Activated CD8-positive, alpha-beta T cell treated with anti-CD3 and anti-CD28 coated beads, Interleukin-2, amount 10 ng/mL, durations not matched to agents 7 days and 5 days (primary cell): ENCODE measurements at regions of chr16 and their contacts with region 1.

Region 1: DNA sequence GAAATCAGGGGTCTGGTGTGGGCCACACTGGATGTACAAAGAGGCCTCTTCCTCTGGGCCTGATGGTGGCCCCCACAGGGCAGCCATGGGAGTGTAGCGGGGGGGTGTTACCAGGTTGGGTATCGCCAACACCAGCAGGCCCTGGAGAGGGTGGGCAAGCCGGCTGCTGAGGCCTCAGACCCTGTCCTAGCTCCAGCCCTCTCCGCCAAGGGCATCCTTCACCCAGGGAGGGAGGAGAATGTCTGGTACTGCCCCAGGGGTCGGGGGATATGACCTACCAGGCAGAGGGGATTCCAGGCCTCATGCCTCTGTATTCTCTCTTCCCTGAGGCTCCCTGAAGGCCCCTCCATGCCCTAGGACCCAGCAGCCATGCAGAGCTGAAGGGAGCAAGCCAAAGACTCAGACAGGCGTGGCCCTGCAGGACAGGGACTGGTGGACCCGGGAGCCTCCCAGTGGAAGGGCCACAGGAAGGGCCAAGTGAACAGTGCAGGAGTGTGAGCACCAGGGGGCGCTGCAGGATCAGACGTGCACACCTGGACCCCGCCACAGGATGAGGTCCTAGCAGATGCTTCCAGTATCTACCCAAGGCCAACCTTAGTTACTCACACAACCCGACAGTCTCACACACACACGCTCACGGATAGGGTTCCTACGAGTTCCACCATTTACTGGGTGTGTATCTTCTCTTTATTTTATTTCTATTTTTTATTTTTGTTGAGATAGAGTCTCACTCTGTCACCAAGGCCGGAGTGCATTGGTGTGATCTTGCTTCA is 10.9 kb upstream of the CES4A start:
- DNase-seq: peak; percentile 94
- ATAC-seq: peak; percentile 99
- H3K4me3 Mint-ChIP-seq: no peak overlapping the region
- H3K27ac Mint-ChIP-seq: peak overlapping the region; percentile 73
- H3K4me1 Mint-ChIP-seq: peaks cover 60% of the 10 kb centered on the region
- H3K27me3 Mint-ChIP-seq: no peaks in the 10 kb centered on the region

Region 2: DNA sequence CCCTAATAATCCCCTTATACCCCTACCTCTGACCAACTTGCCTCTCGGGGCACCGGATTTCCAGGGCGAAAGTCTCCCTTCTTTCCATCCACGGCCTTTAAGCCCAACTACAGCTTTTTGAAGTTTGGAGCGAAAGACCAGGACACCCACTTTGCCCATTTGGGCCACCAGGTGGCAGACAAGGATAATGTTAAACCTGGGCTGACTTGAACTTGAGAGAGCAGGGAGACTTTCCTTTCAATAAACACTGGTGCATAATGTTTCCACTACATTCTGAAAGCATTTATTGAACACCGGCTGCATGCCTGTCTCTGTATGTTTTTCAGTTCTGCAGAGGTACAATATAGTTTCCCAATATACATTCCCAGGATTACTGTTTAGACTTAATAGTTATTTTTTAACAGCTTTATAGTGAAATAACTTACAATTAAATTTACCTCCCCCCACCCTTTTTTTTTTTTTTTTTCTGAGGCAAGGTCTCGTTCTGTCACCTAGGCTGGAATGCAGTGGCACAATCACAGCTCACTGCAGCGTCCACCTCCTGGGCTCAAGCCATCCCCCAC is 23.3 kb before region 1 on chr16:
- CTCF ChIA-PET with region 1: interaction called, 13 read pairs
- POLR2A ChIA-PET with region 1: no interaction called
- DNase-seq: peak; percentile 87
- ATAC-seq: peak; percentile 98
- H3K4me3 Mint-ChIP-seq: no peak overlapping the region
- H3K27ac Mint-ChIP-seq: no peak overlapping the region
- H3K4me1 Mint-ChIP-seq: peaks cover 22% of the 10 kb centered on the region
- H3K27me3 Mint-ChIP-seq: peaks cover 33% of the 10 kb centered on the region

Region 3: DNA sequence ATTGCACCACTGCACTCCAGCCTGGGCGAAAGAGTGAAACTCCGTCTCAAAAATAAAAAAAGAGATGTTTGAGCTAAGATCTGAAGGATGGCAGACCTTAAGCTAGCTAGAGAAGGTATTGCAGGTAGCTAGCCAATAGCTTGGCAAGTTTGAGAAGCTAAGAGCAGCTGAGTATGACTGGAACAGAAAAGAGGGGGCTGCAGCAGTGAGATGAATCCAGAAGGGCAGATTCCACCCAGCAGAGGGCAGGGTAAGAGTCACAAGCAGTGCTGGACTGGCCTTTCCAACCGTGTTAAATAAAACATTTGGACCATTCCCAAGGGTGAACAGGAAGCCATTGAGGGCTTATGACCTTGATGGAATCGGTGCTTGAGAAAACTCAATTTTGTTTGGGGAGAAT is 126.5 kb after region 1 on chr16:
- CTCF ChIA-PET with region 1: interaction called, 21 read pairs
- POLR2A ChIA-PET with region 1: no interaction called
- DNase-seq: no peak
- ATAC-seq: no peak
- H3K4me3 Mint-ChIP-seq: no peak overlapping the region
- H3K27ac Mint-ChIP-seq: peak overlapping the region; percentile 35
- H3K4me1 Mint-ChIP-seq: peaks cover 2% of the 10 kb centered on the region
- H3K27me3 Mint-ChIP-seq: no peaks in the 10 kb centered on the region